ENCODE measurements at regions of chr22 and their contacts with region 1.

Region 1: GRCh38 chr22:44735540-44736488 is 16.6 kb upstream of the ARHGAP8 start:
- DNase-seq: peak; percentile 56
- H3K4me3 Mint-ChIP-seq: no peak overlapping the region
- H3K27ac Mint-ChIP-seq: no peak overlapping the region
- H3K4me1 Mint-ChIP-seq: no peaks in the 10 kb centered on the region
- H3K27me3 Mint-ChIP-seq: no peaks in the 10 kb centered on the region
- CTCF ChIP-seq: peak; percentile 96

Region 2: GRCh38 chr22:43826142-43827002 is 909.4 kb before region 1 on chr22:
- CTCF ChIA-PET with region 1: no interaction called
- POLR2A ChIA-PET with region 1: no interaction called
- intact Hi-C with region 1: no loop called
- DNase-seq: peak; percentile 18
- H3K4me3 Mint-ChIP-seq: no peak overlapping the region
- H3K27ac Mint-ChIP-seq: no peak overlapping the region
- H3K4me1 Mint-ChIP-seq: no peaks in the 10 kb centered on the region
- H3K27me3 Mint-ChIP-seq: peaks cover 63% of the 10 kb centered on the region
- CTCF ChIP-seq: peak; percentile 29

Region 3: DNA sequence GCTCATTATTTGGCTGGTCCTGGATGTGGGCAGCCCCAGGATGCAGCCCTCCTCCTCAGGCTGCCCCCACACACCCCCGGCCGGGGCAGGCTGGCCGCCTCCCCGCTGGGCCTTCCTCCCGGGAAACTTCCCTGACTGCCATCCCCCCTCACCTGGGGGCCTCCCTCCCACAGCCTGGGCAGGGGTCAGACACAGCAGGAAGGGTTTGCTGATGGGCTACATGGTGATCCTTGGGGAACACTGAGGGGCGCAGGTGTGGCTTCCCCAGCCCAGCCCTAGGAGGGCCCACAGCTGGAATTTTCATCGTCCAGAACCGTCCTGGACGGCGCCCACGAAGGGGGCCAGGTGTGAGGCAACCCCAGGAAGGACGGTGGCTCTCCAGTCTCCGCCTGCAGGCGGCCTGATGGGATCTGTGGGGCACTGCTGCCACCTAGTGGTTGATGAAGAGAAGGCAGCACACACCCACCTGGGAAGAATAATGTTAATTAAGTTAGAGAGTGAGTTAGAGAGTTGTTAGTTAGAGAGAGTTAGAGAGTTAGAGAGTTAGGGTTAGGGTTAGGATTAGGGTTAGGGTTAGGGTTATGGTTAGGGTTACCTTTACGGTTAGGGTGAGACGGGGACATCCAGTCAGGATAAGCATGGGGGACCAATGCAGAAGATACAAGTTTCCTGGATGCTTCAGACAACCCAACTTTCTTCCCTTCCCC is 109.7 kb before region 1 on chr22:
- CTCF ChIA-PET with region 1: no interaction called
- POLR2A ChIA-PET with region 1: no interaction called
- intact Hi-C with region 1: no loop called
- DNase-seq: peak; percentile 67
- H3K4me3 Mint-ChIP-seq: no peak overlapping the region
- H3K27ac Mint-ChIP-seq: no peak overlapping the region
- H3K4me1 Mint-ChIP-seq: no peaks in the 10 kb centered on the region
- H3K27me3 Mint-ChIP-seq: peaks cover 27% of the 10 kb centered on the region
- CTCF ChIP-seq: peak; percentile 97

Region 4: GRCh38 chr22:44684506-44685383 is 51.1 kb before region 1 on chr22:
- CTCF ChIA-PET with region 1: interaction called, 13 read pairs
- POLR2A ChIA-PET with region 1: no interaction called
- intact Hi-C with region 1: no loop called
- DNase-seq: peak; percentile 92
- H3K4me3 Mint-ChIP-seq: peak overlapping the region; percentile 37
- H3K27ac Mint-ChIP-seq: peak overlapping the region; percentile 80
- H3K4me1 Mint-ChIP-seq: peaks cover 20% of the 10 kb centered on the region
- H3K27me3 Mint-ChIP-seq: no peaks in the 10 kb centered on the region
- CTCF ChIP-seq: peak; percentile 96

Region 5: GRCh38 chr22:44697423-44698141 is 38.2 kb before region 1 on chr22:
- CTCF ChIA-PET with region 1: interaction called, 11 read pairs
- POLR2A ChIA-PET with region 1: no interaction called
- intact Hi-C with region 1: loop called (anchors 1 kb)
- DNase-seq: peak; percentile 77
- H3K4me3 Mint-ChIP-seq: no peak overlapping the region
- H3K27ac Mint-ChIP-seq: no peak overlapping the region
- H3K4me1 Mint-ChIP-seq: no peaks in the 10 kb centered on the region
- H3K27me3 Mint-ChIP-seq: no peaks in the 10 kb centered on the region
- CTCF ChIP-seq: peak; percentile 85

Region 6: GRCh38 chr22:44707752-44708151 is 28.1 kb before region 1 on chr22:
- CTCF ChIA-PET with region 1: interaction called, 10 read pairs
- POLR2A ChIA-PET with region 1: no interaction called
- intact Hi-C with region 1: no loop called
- DNase-seq: no peak
- H3K4me3 Mint-ChIP-seq: no peak overlapping the region
- H3K27ac Mint-ChIP-seq: no peak overlapping the region
- H3K4me1 Mint-ChIP-seq: peaks cover 4% of the 10 kb centered on the region
- H3K27me3 Mint-ChIP-seq: no peaks in the 10 kb centered on the region
- CTCF ChIP-seq: no peak

Region 7: DNA sequence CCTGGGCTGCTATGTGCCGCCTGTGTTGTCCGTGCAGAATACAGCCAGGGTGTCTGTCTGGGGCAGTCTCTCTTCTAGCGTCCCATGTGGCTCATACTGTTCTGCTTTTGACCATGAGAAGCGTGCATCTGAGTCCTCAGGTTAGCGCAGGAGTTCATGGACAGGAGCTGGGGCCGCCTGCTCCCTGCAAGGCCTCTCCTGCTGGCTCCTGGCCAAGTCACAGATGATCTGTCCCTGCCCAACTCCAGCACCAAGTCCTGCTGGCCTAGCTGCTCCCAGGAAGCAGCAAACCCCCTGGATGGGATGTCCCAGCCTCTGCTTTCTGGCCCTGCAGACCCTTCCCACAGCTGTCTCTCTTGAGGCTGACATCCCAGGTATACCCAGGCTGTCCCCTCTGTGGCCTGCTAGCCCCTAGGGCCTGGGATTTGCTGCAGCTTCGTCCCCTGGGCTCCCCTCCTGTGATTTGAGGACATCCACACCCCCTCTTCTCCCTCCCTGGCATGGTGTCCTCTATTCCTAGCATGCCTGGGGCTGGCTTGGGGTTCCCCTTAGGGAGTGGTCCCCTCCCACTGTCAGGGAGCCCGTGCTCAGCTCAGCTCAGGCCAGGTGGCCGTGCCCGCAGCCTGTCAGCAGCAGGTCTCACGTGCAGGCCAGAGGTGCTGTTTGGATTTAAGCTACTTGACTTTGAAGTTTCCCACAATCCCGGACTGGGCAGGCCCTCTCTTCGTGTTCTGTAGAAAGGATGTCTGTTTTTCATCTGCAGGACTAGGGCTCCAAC is 16.0 kb before region 1 on chr22:
- CTCF ChIA-PET with region 1: interaction called, 14 read pairs
- POLR2A ChIA-PET with region 1: no interaction called
- intact Hi-C with region 1: no loop called
- DNase-seq: no peak
- H3K4me3 Mint-ChIP-seq: no peak overlapping the region
- H3K27ac Mint-ChIP-seq: no peak overlapping the region
- H3K4me1 Mint-ChIP-seq: no peaks in the 10 kb centered on the region
- H3K27me3 Mint-ChIP-seq: no peaks in the 10 kb centered on the region
- CTCF ChIP-seq: no peak

Region 8: GRCh38 chr22:44838316-44839016 is 102.7 kb after region 1 on chr22:
- CTCF ChIA-PET with region 1: no interaction called
- POLR2A ChIA-PET with region 1: no interaction called
- intact Hi-C with region 1: no loop called
- DNase-seq: no peak
- H3K4me3 Mint-ChIP-seq: no peak overlapping the region
- H3K27ac Mint-ChIP-seq: no peak overlapping the region
- H3K4me1 Mint-ChIP-seq: no peaks in the 10 kb centered on the region
- H3K27me3 Mint-ChIP-seq: no peaks in the 10 kb centered on the region
- CTCF ChIP-seq: no peak